A673 (cell line): ENCODE measurements at regions of chr9 and their contacts with region 1.

Region 1: GRCh38 chr9:97954550-97954989 is 16.6 kb upstream of the HEMGN start:
- DNase-seq: no peak
- H3K4me3 ChIP-seq: no peak overlapping the region
- H3K27ac ChIP-seq: no peak overlapping the region
- H3K4me1 ChIP-seq: no peaks in the 10 kb centered on the region
- H3K27me3 ChIP-seq: peaks cover 26% of the 10 kb centered on the region
- CTCF ChIP-seq: peak; percentile 45

Region 2: GRCh38 chr9:98022447-98022846 is 67.9 kb after region 1 on chr9:
- CTCF ChIA-PET with region 1: no interaction called
- POLR2A ChIA-PET with region 1: interaction called, 15 read pairs
- intact Hi-C with region 1: no loop called
- DNase-seq: no peak
- H3K4me3 ChIP-seq: no peak overlapping the region
- H3K27ac ChIP-seq: no peak overlapping the region
- H3K4me1 ChIP-seq: no peaks in the 10 kb centered on the region
- H3K27me3 ChIP-seq: no peaks in the 10 kb centered on the region
- CTCF ChIP-seq: no peak